Activated T-helper 1 cell treated with anti-CD3 and anti-CD28 coated beads, Interleukin-12 subunit alpha, Interleukin-12 subunit beta, Interleukin-2, Interleukin-4 antibody, amounts not matched to agents 30 ng/mL and 10 ng/mL and 1 ng/mL, durations not matched to agents 14 hours and 24 hours and 36 hours (primary cell): ENCODE measurements at regions of chr4 and their contacts with region 1.

Region 1: DNA sequence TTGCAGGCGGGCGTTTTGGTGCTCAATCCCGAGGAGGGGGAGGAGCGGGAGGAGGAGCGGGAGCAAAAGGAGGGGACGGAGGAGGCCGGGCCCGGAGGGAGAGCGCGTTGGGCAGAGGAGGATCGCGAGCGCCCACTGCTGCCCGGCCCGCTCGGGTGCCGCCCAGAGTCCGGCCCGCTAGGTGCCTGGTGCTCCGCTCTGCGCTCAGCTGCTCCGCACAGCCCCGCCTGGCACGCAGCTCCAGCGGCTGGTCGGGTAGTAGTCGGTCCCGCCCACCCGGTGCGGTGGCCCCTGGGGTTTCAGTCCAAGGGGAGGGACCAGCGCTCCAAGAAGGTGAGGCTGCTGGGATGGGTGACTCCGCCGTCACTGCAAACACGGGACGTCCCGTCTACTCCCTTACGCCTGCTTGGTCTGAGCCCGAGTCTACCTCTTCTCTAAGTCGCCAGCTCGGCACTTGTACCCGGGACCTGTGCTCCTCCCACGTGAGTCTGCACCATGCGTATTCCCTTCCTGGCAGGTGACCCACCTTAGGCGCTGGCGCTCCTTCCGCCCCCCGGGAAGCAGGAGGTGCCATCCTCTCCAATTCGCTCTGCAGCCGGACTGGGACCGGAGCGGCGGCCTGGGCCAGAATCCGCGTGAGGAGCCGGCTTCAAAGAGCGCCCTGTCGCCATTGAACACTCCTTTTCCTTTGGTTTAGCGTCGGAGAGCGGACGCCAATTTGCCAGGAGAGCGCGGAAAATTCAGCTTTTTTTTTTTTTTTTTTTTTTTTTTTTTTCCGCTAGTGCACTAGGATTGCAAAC is 405 bp upstream of the HS3ST1 start:
- DNase-seq: peak; percentile 4
- H3K4me3 Mint-ChIP-seq: peak overlapping the region; percentile 54
- H3K27ac Mint-ChIP-seq: no peak overlapping the region
- H3K4me1 Mint-ChIP-seq: no peaks in the 10 kb centered on the region
- H3K27me3 Mint-ChIP-seq: peaks cover 54% of the 10 kb centered on the region

Region 2: GRCh38 chr4:11954093-11954492 is 525.0 kb after region 1 on chr4:
- intact Hi-C with region 1: loop called (anchors 10 kb)
- DNase-seq: no peak
- H3K4me3 Mint-ChIP-seq: no peak overlapping the region
- H3K27ac Mint-ChIP-seq: no peak overlapping the region
- H3K4me1 Mint-ChIP-seq: no peaks in the 10 kb centered on the region
- H3K27me3 Mint-ChIP-seq: no peaks in the 10 kb centered on the region